Common myeloid progenitor, CD34-positive (primary cell): ENCODE measurements at regions of chr1 and their contacts with region 1.

Region 1: DNA sequence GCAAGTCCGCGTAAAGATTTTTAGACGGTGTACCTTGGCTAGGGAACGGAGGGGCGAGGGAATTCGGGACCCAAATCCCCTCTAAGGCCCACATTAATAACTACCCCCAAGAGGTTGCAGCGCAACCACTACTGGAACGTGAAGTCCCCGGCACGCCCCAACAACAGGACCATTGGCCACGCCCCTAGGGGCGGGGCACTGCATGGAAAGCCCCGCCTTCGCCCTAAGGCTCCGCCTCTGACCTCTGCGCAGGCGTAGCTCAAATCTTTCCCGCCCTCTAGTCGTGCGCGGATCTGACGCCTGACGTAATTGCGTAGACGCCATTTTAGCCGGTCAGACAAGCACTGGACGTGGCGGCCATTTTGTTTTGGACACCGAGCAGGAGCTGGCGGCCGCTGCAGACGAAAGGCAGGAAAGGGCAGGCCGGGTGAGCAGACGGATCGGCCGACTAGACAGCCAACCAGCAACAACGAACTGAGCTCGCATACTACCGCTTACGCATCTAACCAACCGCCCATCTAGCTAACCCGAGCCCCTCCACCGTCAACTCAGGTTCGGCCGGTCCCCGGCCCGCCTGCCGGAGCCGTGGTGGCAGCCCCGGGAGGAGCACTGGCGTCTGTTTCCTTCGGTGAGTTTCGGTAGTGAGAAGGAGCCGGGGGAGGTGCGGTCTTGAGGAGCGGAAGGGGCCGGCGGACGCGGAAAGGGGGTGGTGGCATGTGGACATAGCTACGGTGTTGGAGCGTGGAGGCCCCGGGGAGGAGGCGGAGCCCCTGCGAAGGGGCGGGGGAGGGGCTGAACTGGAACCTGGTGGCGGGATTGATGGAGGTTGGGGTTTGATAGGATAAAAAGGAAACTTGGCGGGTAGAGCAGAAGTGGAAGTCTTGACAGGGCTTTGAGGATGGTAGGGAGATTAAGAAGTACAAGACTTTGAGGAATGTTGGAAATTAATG is at the start of gene CHTOP:
- DNase-seq: peak; percentile 98 to 99 (median 99)
- H3K4me3 ChIP-seq: peak within 1 kb of the TSS; percentile 64 to 99 (median 90)
- H3K27ac ChIP-seq: peak within 1 kb of the TSS; percentile 100
- H3K4me1 ChIP-seq: peaks cover 0 to 29% (median 11%) of the 10 kb centered on the region in 4 experiments
- H3K27me3 ChIP-seq: no peaks in the 10 kb centered on the region

Region 2: GRCh38 chr1:153646672-153647374 is 12.8 kb after region 1 on chr1:
- CTCF ChIA-PET with region 1: interaction called, 15 read pairs
- POLR2A ChIA-PET with region 1: interaction called, 9 read pairs
- DNase-seq: no peak
- H3K4me3 ChIP-seq: no peak overlapping the region
- H3K27ac ChIP-seq: no peak overlapping the region
- H3K4me1 ChIP-seq: peaks cover 0 to 7% (median 2%) of the 10 kb centered on the region in 4 experiments
- H3K27me3 ChIP-seq: no peaks in the 10 kb centered on the region

Region 3: GRCh38 chr1:153658400-153659174 is 24.6 kb after region 1 on chr1 and contains the start of gene SNAPIN:
- CTCF ChIA-PET with region 1: no interaction called
- POLR2A ChIA-PET with region 1: interaction called, 10 read pairs
- DNase-seq: peak; percentile 89 to 93 (median 92)
- H3K4me3 ChIP-seq: peak within 1 kb of the TSS; percentile 66 to 97 (median 88)
- H3K27ac ChIP-seq: peak within 1 kb of the TSS; percentile 77 to 85
- H3K4me1 ChIP-seq: peaks cover 3 to 18% (median 13%) of the 10 kb centered on the region in 4 experiments
- H3K27me3 ChIP-seq: no peaks in the 10 kb centered on the region